K562 (cell line): ENCODE measurements at regions of chr6 and their contacts with region 1.

Region 1: GRCh38 chr6:160520043-160520904 is 143.8 kb downstream of the LPA start:
- DNase-seq: peak; percentile 84 to 86 (median 85)
- ATAC-seq: peak; percentile 94
- H3K4me3 ChIP-seq: peak overlapping the region; percentile 54
- H3K27ac ChIP-seq: peak overlapping the region; percentile 43; the same call in 2 of the 3 replicates
- H3K4me1 ChIP-seq: peaks cover 3 to 9% of the 10 kb centered on the region in 2 experiments; a peak in 3 of 5 replicates
- H3K27me3 ChIP-seq: no peaks in the 10 kb centered on the region
- CTCF ChIP-seq: peak; percentile 4 to 58 (median 32); a peak in 5 of 6 replicates
- EP300 ChIP-seq: no peak; the same call in 1 of the 2 replicates
- POLR2A ChIP-seq: peak; percentile 65; the same call in 1 of the 2 replicates
- RAD21 ChIP-seq: peak; percentile 85 to 90

Region 2: DNA sequence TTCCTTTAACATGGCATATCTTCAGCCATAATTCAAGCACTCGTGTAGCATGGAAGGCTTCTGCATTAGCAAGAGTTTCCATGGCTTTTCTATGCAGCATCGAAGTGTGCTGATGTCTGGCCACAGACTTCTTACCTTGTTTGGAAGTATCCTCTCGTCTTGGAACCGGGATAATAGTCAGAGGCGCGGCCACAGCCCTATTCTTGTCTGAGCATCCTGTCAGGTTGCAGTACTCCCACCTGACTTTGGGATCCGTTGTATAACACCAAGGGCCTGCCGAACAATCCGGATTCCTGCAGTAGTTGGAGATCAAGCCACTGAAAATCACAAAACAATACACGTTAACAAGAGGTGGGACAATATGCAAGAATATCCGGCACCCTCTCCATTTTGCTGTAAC is 33.2 kb before region 1 on chr6:
- CTCF ChIA-PET with region 1: no interaction called
- POLR2A ChIA-PET with region 1: no interaction called
- in situ Hi-C with region 1: no loop called
- intact Hi-C with region 1: no loop called
- DNase-seq: no peak
- ATAC-seq: no peak
- H3K4me3 ChIP-seq: no peak overlapping the region
- H3K27ac ChIP-seq: no peak overlapping the region
- H3K4me1 ChIP-seq: no peaks in the 10 kb centered on the region
- H3K27me3 ChIP-seq: peaks cover 0 to 7% of the 10 kb centered on the region in 2 experiments; a peak in 1 of 5 replicates
- CTCF ChIP-seq: no peak
- EP300 ChIP-seq: no peak
- POLR2A ChIP-seq: no peak
- RAD21 ChIP-seq: no peak

Region 3: GRCh38 chr6:160583794-160584193 is 63.5 kb after region 1 on chr6:
- CTCF ChIA-PET with region 1: no interaction called
- POLR2A ChIA-PET with region 1: no interaction called
- in situ Hi-C with region 1: no loop called
- intact Hi-C with region 1: loop called (anchors 1 kb)
- DNase-seq: no peak
- ATAC-seq: no peak
- H3K4me3 ChIP-seq: no peak overlapping the region
- H3K27ac ChIP-seq: no peak overlapping the region
- H3K4me1 ChIP-seq: no peaks in the 10 kb centered on the region
- H3K27me3 ChIP-seq: no peaks in the 10 kb centered on the region
- CTCF ChIP-seq: no peak
- EP300 ChIP-seq: no peak
- POLR2A ChIP-seq: no peak
- RAD21 ChIP-seq: no peak

Region 4: DNA sequence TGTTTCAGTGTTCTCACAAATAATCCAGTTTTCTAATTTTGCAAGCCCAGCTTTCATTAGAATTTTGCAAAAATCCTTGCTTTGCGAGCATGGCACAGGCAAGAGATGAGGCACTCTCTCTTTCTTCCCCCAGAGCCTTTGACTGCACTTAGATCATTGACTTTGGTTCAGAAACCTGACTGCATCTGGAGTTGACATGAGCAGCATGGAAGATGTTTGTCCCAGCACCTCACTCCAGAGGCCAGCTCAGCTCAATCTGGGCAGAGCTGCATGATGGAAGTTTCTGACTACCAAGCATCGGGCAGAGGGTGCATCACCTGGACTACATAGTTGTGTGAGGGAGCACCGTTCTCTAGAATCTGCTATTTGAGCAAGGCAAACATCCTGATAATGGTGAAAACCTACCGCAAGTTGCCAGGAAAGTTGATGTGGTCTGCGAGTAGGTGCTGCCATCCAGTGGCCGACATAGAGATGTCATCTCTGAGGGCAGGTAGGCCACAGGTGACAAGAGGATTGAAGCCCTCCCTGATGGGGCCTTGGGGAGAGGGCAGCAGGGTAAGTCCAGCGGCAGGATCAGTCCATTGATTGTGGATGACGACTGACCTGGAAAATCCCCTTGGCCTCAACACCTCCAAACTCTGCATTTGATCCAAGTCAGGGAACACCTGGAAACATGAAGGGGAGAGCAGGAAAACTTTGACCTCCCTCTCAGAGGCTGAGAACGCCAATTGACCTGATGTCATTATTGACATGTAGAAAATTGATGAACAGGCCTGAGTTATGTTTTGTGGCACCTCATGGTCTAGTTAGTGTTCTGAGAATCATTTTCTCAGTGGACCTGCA is 147.6 kb after region 1 on chr6:
- CTCF ChIA-PET with region 1: interaction called, 7 read pairs
- POLR2A ChIA-PET with region 1: no interaction called
- in situ Hi-C with region 1: no loop called
- intact Hi-C with region 1: loop called (anchors 1 kb)
- DNase-seq: peak; percentile 65 to 72 (median 70)
- ATAC-seq: peak; percentile 94
- H3K4me3 ChIP-seq: no peak overlapping the region
- H3K27ac ChIP-seq: no peak overlapping the region
- H3K4me1 ChIP-seq: no peaks in the 10 kb centered on the region
- H3K27me3 ChIP-seq: peaks cover 0 to 8% of the 10 kb centered on the region in 2 experiments; a peak in 1 of 5 replicates
- CTCF ChIP-seq: peak; percentile 74 to 89 (median 83)
- EP300 ChIP-seq: no peak
- POLR2A ChIP-seq: no peak
- RAD21 ChIP-seq: peak; percentile 50 to 82

Region 5: GRCh38 chr6:160853946-160854345 is 333.7 kb after region 1 on chr6:
- CTCF ChIA-PET with region 1: interaction called, 10 read pairs
- POLR2A ChIA-PET with region 1: no interaction called
- in situ Hi-C with region 1: no loop called
- intact Hi-C with region 1: no loop called
- DNase-seq: no peak
- ATAC-seq: no peak
- H3K4me3 ChIP-seq: no peak overlapping the region
- H3K27ac ChIP-seq: no peak overlapping the region
- H3K4me1 ChIP-seq: no peaks in the 10 kb centered on the region
- H3K27me3 ChIP-seq: no peaks in the 10 kb centered on the region; a peak in 1 of 5 replicates
- CTCF ChIP-seq: no peak
- EP300 ChIP-seq: no peak
- POLR2A ChIP-seq: no peak
- RAD21 ChIP-seq: no peak